Naive thymus-derived CD4-positive, alpha-beta T cell (primary cell): ENCODE measurements at regions of chr2 and their contacts with region 1.

Region 1: DNA sequence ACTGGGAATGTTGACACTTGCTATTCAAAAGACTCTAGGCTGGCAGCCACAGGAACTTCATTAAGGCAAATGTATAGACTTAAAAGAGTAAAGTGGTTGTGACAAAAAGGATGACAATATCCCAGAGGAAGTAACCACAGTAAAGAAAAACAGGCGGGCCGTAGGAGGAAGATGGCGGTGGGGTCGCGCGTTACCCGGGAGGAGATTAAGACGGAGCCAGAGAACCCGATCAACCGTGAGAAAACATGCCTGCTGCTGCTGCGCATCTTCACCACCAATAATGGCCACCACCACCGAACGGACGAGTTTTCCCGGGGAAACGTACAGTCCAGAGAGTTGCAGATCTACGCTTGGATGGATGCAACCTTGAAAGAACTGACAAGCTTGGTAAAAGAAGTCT is 14.0 kb upstream of the NEUROD1 start:
- DNase-seq: no peak
- ATAC-seq: no peak
- H3K4me3 ChIP-seq: no peak overlapping the region
- H3K4me3 Mint-ChIP-seq: no peak overlapping the region
- H3K27ac ChIP-seq: no peak overlapping the region
- H3K27ac Mint-ChIP-seq: no peak overlapping the region
- H3K4me1 ChIP-seq: no peaks in the 10 kb centered on the region
- H3K4me1 Mint-ChIP-seq: no peaks in the 10 kb centered on the region
- H3K27me3 ChIP-seq: no peaks in the 10 kb centered on the region
- H3K27me3 Mint-ChIP-seq: peaks cover 14 to 39% (median 32%) of the 10 kb centered on the region in 5 donors

Region 2: GRCh38 chr2:181374781-181375675 is 319.2 kb before region 1 on chr2:
- CTCF ChIA-PET with region 1: no interaction called
- POLR2A ChIA-PET with region 1: no interaction called
- intact Hi-C with region 1: no loop called
- DNase-seq: no peak
- ATAC-seq: no peak
- H3K4me3 ChIP-seq: no peak overlapping the region
- H3K4me3 Mint-ChIP-seq: no peak overlapping the region
- H3K27ac ChIP-seq: no peak overlapping the region
- H3K27ac Mint-ChIP-seq: no peak overlapping the region
- H3K4me1 ChIP-seq: peaks cover 6 to 17% of the 10 kb centered on the region in 2 donors
- H3K4me1 Mint-ChIP-seq: peaks cover 13 to 30% (median 25%) of the 10 kb centered on the region in 7 donors
- H3K27me3 ChIP-seq: no peaks in the 10 kb centered on the region
- H3K27me3 Mint-ChIP-seq: no peaks in the 10 kb centered on the region

Region 3: GRCh38 chr2:181790716-181791649 is 96.7 kb after region 1 on chr2:
- CTCF ChIA-PET with region 1: no interaction called
- POLR2A ChIA-PET with region 1: no interaction called
- intact Hi-C with region 1: no loop called
- DNase-seq: peak in 2 of 9 donors; percentile 6 to 10
- ATAC-seq: peak; percentile 68
- H3K4me3 ChIP-seq: no peak overlapping the region
- H3K4me3 Mint-ChIP-seq: peak overlapping the region in 1 of 10 donors; percentile 15
- H3K27ac ChIP-seq: no peak overlapping the region
- H3K27ac Mint-ChIP-seq: peak overlapping the region in 3 of 9 donors; percentile 12 to 75 (median 12)
- H3K4me1 ChIP-seq: no peaks in the 10 kb centered on the region
- H3K4me1 Mint-ChIP-seq: peaks cover 0 to 26% (median 4%) of the 10 kb centered on the region in 7 donors
- H3K27me3 ChIP-seq: no peaks in the 10 kb centered on the region
- H3K27me3 Mint-ChIP-seq: peaks cover 0 to 7% (median 4%) of the 10 kb centered on the region in 5 donors

Region 4: DNA sequence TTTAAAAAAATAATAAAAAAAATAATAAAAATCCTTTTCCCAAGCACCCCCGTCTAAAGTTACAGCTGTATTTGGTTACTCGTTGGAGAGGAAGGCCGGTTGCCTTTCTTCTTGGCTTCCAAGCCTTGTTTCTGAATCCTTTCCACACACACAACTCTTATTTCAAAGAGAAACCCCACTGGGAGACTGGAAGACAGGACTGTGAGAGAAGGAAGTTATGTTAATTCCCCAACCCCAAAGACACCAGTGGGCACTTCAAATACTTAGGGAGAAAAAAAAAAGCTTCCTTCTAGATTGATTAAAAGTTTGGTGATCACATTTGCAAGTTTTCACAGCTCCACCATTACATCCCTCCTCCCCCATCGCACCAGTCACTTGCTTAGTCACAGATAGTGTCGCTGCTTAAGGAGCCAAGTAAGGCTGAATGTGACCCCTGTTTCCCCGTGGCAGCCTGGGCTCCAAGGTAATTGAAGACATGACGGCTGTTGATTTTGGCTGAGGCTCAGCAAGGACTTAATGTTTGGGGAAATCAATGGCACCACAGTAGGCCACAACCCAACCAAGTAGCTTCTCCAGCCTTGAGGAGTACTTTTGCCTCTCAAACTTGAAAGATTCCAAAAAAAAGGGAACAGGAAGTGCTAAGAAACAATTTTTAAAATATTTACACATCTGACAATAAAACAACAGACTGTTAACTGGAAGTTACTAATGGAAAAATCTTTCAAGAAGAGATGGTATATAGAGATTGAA is 1213.0 kb after region 1 on chr2:
- CTCF ChIA-PET with region 1: no interaction called
- POLR2A ChIA-PET with region 1: no interaction called
- intact Hi-C with region 1: loop called in 1 of 2 experiments (anchors 5 kb)
- DNase-seq: no peak
- ATAC-seq: no peak
- H3K4me3 ChIP-seq: no peak overlapping the region
- H3K4me3 Mint-ChIP-seq: no peak overlapping the region
- H3K27ac ChIP-seq: no peak overlapping the region
- H3K27ac Mint-ChIP-seq: peak overlapping the region in 1 of 9 donors; percentile 21
- H3K4me1 ChIP-seq: no peaks in the 10 kb centered on the region
- H3K4me1 Mint-ChIP-seq: no peaks in the 10 kb centered on the region
- H3K27me3 ChIP-seq: no peaks in the 10 kb centered on the region
- H3K27me3 Mint-ChIP-seq: no peaks in the 10 kb centered on the region